H1 (cell line): ENCODE measurements at regions of chr12 and their contacts with region 1.

Region 1: GRCh38 chr12:108722992-108723766 is 8.1 kb downstream of the CORO1C start:
- DNase-seq: no peak
- H3K4me3 ChIP-seq: no peak overlapping the region
- H3K27ac ChIP-seq: no peak overlapping the region
- H3K4me1 ChIP-seq: peaks cover 0 to 13% (median 3%) of the 10 kb centered on the region in 4 experiments; a peak in 5 of 7 replicates
- H3K27me3 ChIP-seq: no peaks in the 10 kb centered on the region
- CTCF ChIP-seq: no peak
- EP300 ChIP-seq: no peak
- POLR2A ChIP-seq: no peak
- RAD21 ChIP-seq: no peak

Region 2: GRCh38 chr12:108616920-108617858 is 106.0 kb before region 1 on chr12:
- CTCF ChIA-PET with region 1: no interaction called
- POLR2A ChIA-PET with region 1: no interaction called
- DNase-seq: no peak
- H3K4me3 ChIP-seq: no peak overlapping the region
- H3K27ac ChIP-seq: no peak overlapping the region
- H3K4me1 ChIP-seq: peaks cover 0 to 6% (median 4%) of the 10 kb centered on the region in 4 experiments; a peak in 4 of 7 replicates
- H3K27me3 ChIP-seq: no peaks in the 10 kb centered on the region
- CTCF ChIP-seq: no peak
- EP300 ChIP-seq: no peak
- POLR2A ChIP-seq: no peak
- RAD21 ChIP-seq: no peak

Region 3: DNA sequence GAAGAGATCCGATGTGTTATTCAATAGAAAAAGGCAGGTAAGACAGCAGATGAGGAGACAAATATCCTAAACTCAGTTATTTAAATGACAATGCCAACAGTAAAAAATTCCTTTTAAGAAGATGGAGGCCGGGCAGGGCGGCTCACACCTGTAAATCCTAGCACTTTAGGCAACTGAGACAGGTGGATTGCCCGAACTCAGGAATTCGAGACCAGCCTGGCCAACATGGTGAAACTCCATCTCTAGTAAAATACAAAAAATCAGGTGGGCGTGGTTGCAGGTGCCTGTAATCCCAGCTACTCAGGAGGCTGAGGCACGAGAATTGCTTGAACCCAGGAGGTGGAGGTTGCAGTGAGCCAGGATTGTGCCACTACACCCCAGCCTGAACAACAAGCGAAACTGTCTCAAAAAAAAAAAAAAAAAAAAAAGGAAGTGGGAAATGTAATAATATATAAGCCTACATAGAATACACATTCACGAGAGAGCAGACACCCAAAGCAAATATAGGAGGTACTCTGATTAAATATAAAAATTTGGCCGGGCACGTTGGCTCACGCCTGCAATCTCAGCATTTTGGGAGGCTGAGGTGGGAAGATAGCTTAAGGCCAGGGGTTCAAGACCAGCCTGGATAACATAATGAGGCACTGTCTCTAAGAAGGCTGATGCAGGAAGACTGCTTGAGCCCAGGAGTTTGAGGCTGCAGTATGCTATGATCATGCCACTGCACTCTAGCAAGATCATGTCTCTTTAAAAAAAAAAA is 10.8 kb before region 1 on chr12:
- CTCF ChIA-PET with region 1: interaction called, 7 read pairs
- POLR2A ChIA-PET with region 1: interaction called, 11 read pairs
- DNase-seq: peak in 1 of 2 experiments; percentile 37
- H3K4me3 ChIP-seq: no peak overlapping the region
- H3K27ac ChIP-seq: no peak overlapping the region
- H3K4me1 ChIP-seq: peaks cover 3 to 14% (median 5%) of the 10 kb centered on the region in 4 experiments; a peak in 4 of 7 replicates
- H3K27me3 ChIP-seq: no peaks in the 10 kb centered on the region
- CTCF ChIP-seq: no peak
- EP300 ChIP-seq: no peak
- POLR2A ChIP-seq: no peak
- RAD21 ChIP-seq: no peak